BJ (cell line): ENCODE measurements at regions of chr5 and their contacts with region 1.

Region 1: DNA sequence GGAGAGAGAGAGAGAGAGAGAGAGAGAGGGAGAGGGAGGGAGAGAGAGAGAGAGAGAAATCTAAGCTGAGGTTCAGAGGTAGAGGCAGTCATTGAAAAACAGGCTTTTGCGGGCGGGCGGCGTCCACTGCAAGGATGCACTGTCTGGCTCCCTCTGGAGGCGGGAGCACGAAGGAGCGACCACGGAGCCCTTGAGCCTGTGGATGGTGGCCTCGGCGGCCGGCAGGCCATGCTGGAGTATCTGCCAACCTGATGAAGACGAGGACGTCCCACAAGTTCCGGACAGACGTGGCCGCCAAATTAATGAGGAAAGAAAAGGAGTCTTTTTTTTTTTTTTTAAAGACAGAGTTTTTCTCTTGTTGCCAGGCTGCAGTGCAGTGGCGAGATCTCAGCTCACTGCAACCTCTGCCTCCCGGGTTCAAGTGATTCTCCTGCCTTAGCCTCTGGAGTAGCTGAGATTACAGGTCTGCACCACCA is 2.2 kb upstream of the CCDC125 start:
- DNase-seq: peak; percentile 14
- H3K4me3 ChIP-seq: no peak overlapping the region
- H3K27me3 ChIP-seq: no peaks in the 10 kb centered on the region
- CTCF ChIP-seq: peak; percentile 90

Region 2: DNA sequence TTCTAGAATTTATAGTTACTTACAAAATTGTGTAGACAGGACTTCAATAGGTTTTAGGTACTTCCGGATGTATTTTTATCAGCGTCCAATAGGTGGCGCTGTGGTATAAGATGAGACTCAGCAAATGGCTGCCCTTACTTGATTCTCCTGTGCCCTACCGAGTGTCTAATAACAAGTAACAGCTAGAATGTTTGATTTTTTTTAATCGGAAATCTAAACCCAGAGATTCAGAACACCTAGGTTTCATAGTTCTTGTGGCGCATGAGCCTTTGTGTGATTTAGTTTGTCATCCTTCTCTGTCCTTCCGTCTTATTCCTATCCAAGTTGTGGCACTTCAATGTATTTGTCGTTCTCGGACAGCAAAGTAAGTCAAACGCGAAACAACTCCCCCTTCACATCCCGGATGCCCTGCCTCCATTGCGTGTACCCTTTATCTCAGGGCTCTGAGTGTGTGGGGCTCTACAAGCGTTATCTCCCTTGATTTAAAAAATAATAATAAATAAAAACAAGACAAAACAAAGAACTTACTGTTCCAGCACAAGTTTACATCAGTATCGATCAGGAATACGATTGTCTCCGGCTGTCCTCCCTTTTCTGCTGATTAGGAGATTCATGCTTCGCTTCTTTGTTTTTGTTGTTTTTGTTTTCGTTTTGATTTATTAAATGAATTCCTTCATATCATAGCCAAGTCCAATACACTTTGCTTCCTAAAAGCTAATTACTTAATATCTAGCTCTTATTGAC is 291.7 kb before region 1 on chr5:
- CTCF ChIA-PET with region 1: interaction called, 14 read pairs
- POLR2A ChIA-PET with region 1: no interaction called
- DNase-seq: peak; percentile 58
- H3K4me3 ChIP-seq: peak overlapping the region; percentile 41
- H3K27me3 ChIP-seq: no peaks in the 10 kb centered on the region
- CTCF ChIP-seq: peak; percentile 73

Region 3: GRCh38 chr5:69093771-69094482 is 240.9 kb before region 1 on chr5 and contains the start of gene SLC30A5:
- CTCF ChIA-PET with region 1: interaction called, 18 read pairs
- POLR2A ChIA-PET with region 1: no interaction called
- DNase-seq: peak; percentile 99
- H3K4me3 ChIP-seq: peak within 1 kb of the TSS; percentile 70
- H3K27me3 ChIP-seq: no peaks in the 10 kb centered on the region
- CTCF ChIP-seq: peak; percentile 93
- polyA plus RNA-seq, gene SLC30A5: 45.8 and 47.4 TPM in 2 replicates